CD4-positive, alpha-beta T cell (primary cell): ENCODE measurements at regions of chr12 and their contacts with region 1.

Region 1: DNA sequence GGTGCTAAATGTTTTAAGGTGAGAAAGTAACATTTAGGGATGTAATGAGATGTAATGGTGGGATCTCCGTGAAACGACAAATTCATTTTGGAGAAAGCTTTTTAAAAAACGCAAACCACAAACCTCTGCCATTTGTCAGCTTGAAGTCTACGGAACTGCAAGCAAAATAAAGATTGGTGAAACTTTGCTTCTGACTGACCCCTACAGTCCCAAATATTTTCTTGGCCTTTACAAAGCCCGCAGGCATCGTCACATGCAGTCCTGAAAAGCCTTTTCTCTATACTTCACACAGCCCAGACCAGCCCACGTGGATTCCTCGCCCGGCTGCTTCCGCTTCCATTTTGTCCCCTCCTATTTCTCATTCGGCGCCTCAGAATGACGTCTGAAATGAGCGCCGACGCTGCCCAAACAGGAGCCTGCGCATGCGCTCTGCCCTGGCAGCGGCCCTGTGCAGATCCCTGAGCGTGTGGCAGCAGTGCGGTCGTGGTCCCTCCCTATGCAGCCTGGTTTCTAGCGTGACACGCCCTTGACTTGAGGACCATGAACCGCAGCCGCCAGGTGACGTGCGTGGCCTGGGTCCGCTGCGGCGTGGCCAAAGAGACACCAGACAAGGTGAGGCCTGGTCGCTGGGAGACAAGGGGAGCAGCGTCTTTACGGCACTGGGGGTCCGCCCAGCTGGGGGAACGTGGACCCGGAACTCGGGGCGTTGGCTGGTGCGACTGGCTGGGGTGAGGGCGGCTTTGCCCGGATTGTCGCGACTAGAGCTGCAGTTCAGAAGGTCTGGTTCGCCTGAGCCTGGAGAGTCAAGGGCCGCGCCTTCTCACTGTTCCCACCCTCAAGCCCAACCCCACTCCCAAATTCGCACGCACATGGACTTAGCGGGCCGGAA is at the start of gene PWP1:
- DNase-seq: peak; percentile 91 to 99 (median 94)
- ATAC-seq: peak; percentile 90
- H3K4me3 ChIP-seq: peak within 1 kb of the TSS; percentile 99
- H3K4me3 Mint-ChIP-seq: peak within 1 kb of the TSS; percentile 97
- H3K27ac ChIP-seq: peak within 1 kb of the TSS; percentile 75 to 91
- H3K27ac Mint-ChIP-seq: peak within 1 kb of the TSS; percentile 94
- H3K4me1 ChIP-seq: peaks cover 24% of the 10 kb centered on the region
- H3K4me1 Mint-ChIP-seq: peaks cover 33% of the 10 kb centered on the region
- H3K27me3 ChIP-seq: no peaks in the 10 kb centered on the region
- H3K27me3 Mint-ChIP-seq: no peaks in the 10 kb centered on the region
- CTCF ChIP-seq: no peak
- total RNA-seq, gene PWP1: 24.1 to 24.2 TPM

Region 2: DNA sequence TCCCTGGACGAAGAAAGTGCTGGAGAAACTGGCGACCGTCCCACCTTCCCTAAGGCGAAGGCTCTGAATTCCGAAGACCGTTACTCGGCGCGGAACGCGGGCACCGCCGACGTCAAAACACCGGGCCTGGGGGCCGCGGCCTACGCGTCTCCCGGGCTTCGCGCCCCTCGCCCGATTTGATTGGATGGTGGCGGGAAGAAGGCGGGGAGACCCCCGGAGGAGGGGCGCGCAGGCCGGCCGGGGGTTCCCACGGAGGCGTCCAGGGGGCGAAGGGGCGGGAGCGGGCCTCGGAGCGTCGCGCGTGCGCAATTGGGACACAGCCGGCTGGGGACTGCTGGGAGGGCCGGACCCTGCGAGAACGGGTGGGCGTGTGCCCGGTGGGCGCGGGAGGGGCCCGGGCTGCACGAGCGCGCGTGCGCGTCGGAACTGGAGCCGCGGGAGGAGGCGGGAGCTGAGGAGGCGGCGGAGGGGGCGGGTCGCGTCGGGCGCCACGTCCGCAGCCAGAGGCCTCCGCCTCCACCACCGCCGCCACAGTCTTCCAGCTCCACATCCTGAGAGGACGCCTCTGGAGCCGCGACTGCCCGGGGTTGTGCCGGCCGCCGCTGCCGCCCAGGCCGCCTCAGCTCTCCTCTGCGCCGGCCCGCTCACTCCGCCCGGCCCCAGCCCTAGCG is 730.1 kb before region 1 on chr12 and contains the start of gene TMEM263:
- CTCF ChIA-PET with region 1: no interaction called
- POLR2A ChIA-PET with region 1: no interaction called
- intact Hi-C with region 1: loop called in 1 of 2 experiments (anchors 10 kb)
- DNase-seq: peak; percentile 74 to 97 (median 88)
- ATAC-seq: peak; percentile 73
- H3K4me3 ChIP-seq: peak within 1 kb of the TSS; percentile 77
- H3K4me3 Mint-ChIP-seq: peak within 1 kb of the TSS; percentile 98
- H3K27ac ChIP-seq: peak within 1 kb of the TSS; percentile 81 to 89
- H3K27ac Mint-ChIP-seq: peak within 1 kb of the TSS; percentile 98
- H3K4me1 ChIP-seq: peaks cover 13% of the 10 kb centered on the region
- H3K4me1 Mint-ChIP-seq: peaks cover 43% of the 10 kb centered on the region
- H3K27me3 ChIP-seq: no peaks in the 10 kb centered on the region
- H3K27me3 Mint-ChIP-seq: no peaks in the 10 kb centered on the region
- CTCF ChIP-seq: no peak
- total RNA-seq, gene TMEM263: 33.2 to 33.4 TPM

Region 3: GRCh38 chr12:107670999-107671643 is 14.5 kb before region 1 on chr12:
- CTCF ChIA-PET with region 1: interaction called, 17 read pairs
- POLR2A ChIA-PET with region 1: interaction called, 8 read pairs
- intact Hi-C with region 1: no loop called
- DNase-seq: peak in 7 of 14 experiments; percentile 6 to 60 (median 23)
- ATAC-seq: no peak
- H3K4me3 ChIP-seq: no peak overlapping the region
- H3K4me3 Mint-ChIP-seq: no peak overlapping the region
- H3K27ac ChIP-seq: no peak overlapping the region
- H3K27ac Mint-ChIP-seq: no peak overlapping the region
- H3K4me1 ChIP-seq: no peaks in the 10 kb centered on the region
- H3K4me1 Mint-ChIP-seq: peaks cover 6% of the 10 kb centered on the region
- H3K27me3 ChIP-seq: no peaks in the 10 kb centered on the region
- H3K27me3 Mint-ChIP-seq: peaks cover 24% of the 10 kb centered on the region
- CTCF ChIP-seq: peak; percentile 43

Region 4: GRCh38 chr12:109154451-109155438 is 1469.1 kb after region 1 on chr12:
- CTCF ChIA-PET with region 1: no interaction called
- POLR2A ChIA-PET with region 1: no interaction called
- intact Hi-C with region 1: loop called in 1 of 2 experiments (anchors 5 kb)
- DNase-seq: peak; percentile 71 to 90 (median 78)
- ATAC-seq: peak; percentile 95
- H3K4me3 ChIP-seq: peak overlapping the region; percentile 75
- H3K4me3 Mint-ChIP-seq: peak overlapping the region; percentile 96
- H3K27ac ChIP-seq: peak overlapping the region in 1 of 2 donors; percentile 17
- H3K27ac Mint-ChIP-seq: peak overlapping the region; percentile 93
- H3K4me1 ChIP-seq: peaks cover 16% of the 10 kb centered on the region
- H3K4me1 Mint-ChIP-seq: peaks cover 21% of the 10 kb centered on the region
- H3K27me3 ChIP-seq: no peaks in the 10 kb centered on the region
- H3K27me3 Mint-ChIP-seq: no peaks in the 10 kb centered on the region
- CTCF ChIP-seq: no peak